Cardiac septum (tissue), 1 donor: ENCODE measurements at regions of chr6 and their contacts with region 1.

Region 1: DNA sequence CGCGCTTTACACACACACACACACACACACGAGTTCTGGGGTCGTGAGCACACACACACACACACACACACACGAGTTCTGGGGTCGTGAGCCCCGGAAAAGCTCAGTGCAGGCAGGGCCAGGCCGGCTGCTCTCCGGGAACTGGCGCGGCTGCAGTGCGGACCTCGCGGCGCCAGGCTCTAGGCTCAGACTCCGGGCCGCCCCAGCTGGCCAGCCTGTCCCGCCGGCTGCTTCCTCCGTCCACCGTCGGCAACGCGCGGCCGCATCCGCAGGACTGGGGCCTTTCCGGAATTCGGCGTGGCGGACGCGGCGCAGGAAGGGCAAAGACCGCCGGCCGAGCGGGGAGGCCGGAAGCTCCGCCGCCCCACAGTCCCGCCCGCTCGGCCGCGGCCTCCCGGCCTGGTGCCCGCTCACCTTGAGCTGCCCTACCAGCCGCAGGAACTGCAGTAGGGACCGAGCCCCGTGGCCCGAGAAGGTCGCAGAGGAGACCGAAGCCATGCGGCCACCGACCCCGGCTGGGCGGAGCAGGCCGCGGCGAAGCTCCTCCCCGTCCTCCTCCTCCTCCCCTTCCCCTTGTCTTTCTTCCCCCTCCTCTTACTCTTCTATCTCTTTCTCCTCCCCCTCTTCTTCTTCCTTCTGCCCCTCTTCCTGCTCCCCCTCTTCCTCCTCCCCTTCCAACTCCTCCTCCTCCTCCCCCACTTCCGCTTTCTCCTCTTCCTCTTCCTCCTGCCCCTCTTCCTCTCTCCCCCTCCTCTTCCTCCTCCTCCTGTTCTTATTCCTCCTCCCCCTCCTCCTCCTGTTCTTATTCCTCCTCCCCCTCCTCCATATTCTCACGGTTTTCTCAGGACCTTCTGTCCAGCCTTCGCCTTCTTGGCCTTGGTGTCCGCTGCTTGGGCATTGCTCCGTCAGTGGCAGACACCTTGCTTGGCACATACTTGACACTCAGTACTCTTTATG is at the start of gene HDDC2:
- DNase-seq: peak; percentile 89
- total RNA-seq, gene HDDC2: 88.8 TPM

Region 2: DNA sequence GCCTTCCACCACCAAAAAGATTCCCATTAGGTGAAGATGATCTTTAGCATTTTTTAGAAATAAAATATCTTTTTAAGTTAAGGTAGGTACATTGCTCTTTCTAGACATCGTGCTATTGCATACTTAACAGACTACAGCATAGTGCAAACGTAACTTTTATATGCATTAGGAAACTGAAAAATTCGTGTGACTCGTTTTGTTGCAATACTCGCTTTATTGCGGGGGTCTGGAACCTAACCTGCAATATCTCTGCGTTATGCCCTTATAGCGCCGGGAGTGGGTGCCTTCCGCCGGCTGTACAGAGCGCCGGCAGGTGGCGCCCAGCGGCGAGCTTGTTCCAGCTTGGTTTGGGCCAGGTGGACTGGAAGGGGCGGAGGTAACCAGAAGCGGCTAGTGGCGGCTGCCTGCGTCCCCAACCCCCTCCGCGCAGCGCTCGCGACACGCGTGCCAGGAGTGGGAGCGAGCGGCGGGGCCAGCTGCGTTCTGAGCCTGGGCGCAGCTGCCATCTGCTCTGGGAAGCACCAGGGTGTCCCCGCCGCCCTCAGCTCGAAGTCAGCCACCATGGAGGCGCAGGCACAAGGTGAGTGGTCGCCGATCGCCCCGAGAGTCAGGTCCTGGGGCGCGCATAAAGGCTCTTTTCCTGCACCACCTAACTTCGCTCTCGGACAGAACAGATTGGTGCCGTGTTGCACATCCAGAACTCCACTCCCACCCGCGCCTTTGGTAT is 148.2 kb before region 1 on chr6 and contains the start of gene TPD52L1:
- intact Hi-C with region 1: loop called (anchors 5 kb)
- DNase-seq: peak; percentile 93
- total RNA-seq, gene TPD52L1: 91.0 TPM

Region 3: GRCh38 chr6:125191916-125192609 is 109.7 kb before region 1 on chr6:
- intact Hi-C with region 1: loop called (anchors 2 kb)
- DNase-seq: no peak

Region 4: GRCh38 chr6:125220712-125221111 is 81.0 kb before region 1 on chr6:
- intact Hi-C with region 1: no loop called
- DNase-seq: no peak

Region 5: DNA sequence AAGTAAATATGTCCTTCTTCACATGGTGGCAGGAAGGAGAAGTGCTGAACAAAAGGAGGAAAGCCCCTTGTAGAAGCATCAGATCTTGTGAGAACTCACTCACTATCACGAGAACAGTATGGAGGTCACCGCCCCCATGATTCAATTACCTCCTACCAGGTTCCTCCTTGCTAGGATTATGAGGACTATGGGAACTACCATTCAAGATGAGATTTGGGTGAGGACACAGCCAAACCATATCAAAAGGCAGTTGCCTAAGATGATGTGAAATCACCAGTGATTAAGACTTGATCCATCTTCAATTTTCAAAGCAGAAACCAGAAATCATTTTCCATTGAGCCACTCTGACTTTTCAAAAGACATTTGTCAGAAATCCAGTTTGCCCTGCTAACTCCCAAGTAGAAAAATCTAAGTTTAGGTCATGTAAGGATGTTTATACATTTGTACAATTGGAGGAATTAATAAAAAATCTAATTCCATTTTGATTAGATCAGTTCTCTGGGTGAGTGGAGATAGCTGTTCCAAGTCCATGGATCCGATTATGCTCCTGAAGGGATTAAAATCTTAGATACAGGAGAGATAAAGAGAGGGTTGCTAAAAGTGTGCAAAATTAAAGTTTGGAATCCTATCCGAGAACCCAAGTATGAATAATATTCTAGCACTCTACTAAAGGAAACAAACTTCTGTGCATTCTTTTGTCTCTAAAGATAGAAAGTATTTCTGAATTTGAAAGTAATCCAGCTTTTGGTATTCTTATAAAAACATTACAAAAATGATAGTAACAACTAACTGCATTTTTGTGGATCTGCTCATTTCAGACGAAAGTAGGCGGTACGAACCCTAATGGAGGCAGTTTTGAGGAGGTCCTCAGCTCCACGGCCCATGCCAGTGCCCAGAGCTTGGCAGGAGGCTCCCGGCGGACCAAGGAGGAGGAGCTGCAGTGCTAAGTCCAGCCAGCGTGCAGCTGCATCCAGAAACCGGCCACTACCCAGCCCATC is 39.4 kb before region 1 on chr6:
- intact Hi-C with region 1: no loop called
- DNase-seq: no peak

Region 6: DNA sequence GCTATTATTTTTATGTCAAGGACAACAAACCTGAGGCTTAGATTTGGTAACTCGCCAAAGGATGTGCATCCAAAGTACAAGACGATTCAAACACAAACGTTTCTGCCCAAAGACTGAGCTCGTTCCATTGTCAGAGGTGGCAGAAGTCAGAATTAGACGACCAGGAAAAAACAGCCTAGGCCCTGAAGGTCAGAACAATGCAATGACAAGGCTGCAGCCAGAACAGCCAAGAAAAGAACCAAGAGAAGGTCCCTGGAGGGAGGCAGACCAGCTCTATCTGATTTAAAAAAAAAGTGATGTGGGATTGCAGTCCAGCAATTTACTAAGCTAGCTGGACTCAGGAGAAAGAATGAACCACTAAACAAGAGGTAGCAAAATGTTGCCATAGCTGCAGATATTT is 543.3 kb after region 1 on chr6:
- intact Hi-C with region 1: loop called (anchors 10 kb)
- DNase-seq: no peak

Region 7: GRCh38 chr6:125956506-125957390 is 655.0 kb after region 1 on chr6 and contains the start of gene HINT3:
- intact Hi-C with region 1: loop called (anchors 10 kb)
- DNase-seq: peak; percentile 99
- total RNA-seq, gene HINT3: 35.0 TPM